Cardiac septum (tissue), 1 donor: ENCODE measurements at regions of chr19 and their contacts with region 1.

Region 1: DNA sequence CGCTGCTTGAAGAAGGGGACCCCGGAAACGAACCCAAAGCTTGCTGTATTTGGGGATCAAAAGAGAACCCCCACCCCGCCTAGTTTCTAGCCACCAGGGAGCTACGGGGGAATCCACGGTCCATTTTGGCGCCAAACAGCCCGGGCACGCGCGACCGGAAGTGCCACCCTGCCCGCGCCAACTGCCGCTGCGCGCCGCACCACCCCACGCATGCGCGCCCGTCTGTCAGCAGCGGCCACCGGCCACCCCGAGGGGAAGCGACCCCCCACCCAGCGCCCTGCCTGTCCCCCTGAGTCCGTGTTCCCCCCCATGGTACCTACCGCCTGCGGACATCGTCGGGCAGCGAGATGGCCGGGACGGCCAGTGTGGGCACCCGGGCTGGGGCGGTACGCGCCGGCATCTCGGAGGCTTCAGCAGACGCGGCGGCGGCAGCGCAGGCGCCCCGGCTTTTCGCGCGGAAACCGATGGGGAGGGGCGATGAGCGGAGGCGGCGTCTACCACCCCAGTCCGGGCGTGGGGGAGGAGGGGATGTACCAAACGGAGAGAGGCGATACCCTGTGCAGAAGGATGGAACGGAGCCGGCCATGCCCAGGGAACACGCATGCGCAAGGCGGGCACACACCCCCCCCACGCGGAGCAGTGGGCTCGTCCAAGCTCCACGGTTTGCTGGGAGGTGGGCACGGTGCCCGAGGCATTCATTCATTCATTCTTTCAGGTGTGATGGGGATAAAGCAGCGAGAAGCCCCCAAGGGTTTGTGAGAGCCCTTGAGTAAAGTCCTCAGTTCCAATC is at the start of gene DNMT1:
- DNase-seq: peak; percentile 95
- total RNA-seq, gene DNMT1: 27.3 TPM

Region 2: DNA sequence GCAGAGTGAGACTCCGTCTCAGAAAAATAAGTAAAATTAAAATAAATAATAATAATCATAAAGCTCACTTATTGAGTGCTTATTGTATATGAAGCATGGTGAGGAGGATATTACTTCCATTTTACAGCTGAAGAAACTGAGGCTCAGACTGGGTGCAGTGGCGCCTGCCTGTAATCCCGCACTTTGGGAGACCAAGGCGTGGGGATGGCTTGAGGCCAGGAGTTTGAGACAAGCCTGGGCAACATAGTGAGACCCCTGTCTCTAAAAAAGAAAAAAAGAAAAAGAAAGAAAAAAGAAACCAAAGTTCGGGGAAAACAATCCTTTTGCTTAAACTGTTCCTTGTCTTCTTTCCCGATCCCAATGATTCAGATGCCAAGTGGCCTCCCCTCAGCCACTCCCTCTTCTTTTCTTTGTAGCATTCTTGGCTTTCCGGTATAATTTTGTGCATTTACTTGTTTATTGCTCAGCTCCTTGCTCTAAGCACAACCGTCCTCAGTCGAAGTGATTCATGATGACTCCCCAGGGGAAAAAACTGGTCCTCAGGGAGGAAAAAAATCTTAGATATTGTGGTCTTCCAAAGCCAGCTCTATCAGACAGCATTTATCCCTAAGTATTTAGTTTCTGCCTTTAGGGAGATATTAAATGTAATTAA is 74.0 kb before region 1 on chr19:
- intact Hi-C with region 1: loop called (anchors 2 kb)
- DNase-seq: no peak

Region 3: DNA sequence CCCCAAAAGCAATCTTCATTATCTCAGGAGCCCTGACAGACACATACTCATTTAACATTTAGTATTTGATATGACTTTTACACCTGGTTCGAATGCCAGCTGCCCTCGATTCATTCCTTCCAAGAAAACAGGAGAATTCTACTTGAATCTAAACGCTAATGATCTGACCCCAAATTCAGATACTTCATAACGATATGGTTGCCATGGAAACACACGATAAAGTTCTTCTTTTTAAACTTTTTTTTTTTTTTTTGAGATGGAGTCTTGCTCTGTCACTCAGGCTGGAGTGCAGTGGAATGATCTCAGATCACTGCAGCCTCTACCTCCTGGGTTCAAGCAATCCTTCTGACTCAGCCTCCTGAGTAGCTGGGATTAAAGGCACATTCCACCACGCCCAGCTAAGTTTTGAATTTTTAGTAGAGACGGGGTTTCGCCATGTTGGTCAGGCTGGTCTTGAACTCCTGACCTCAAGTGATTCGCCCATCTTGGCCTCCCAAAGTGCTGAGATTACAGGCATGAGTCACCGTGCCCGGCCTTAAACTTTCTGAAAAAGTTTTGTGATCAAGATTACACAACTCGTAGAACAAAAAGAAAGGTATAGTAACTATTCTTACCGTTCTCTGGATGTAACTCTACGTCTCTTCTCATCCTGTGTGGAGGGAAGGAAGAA is 21.3 kb before region 1 on chr19:
- intact Hi-C with region 1: no loop called
- DNase-seq: no peak

Region 4: GRCh38 chr19:10228920-10229319 is 34.2 kb after region 1 on chr19:
- intact Hi-C with region 1: loop called (anchors 5 kb)
- DNase-seq: no peak

Region 5: GRCh38 chr19:10251792-10252694 is 57.3 kb after region 1 on chr19 and contains the start of gene MRPL4:
- intact Hi-C with region 1: loop called (anchors 2 kb)
- DNase-seq: peak; percentile 98
- total RNA-seq, gene MRPL4: 71.8 TPM